Activated CD8-positive, alpha-beta memory T cell treated with anti-CD3 and anti-CD28 coated beads, Interleukin-2, amount 10 ng/mL, durations not matched to agents 7 days and 5 days (primary cell): ENCODE measurements at regions of chr14 and their contacts with region 1.

Region 1: DNA sequence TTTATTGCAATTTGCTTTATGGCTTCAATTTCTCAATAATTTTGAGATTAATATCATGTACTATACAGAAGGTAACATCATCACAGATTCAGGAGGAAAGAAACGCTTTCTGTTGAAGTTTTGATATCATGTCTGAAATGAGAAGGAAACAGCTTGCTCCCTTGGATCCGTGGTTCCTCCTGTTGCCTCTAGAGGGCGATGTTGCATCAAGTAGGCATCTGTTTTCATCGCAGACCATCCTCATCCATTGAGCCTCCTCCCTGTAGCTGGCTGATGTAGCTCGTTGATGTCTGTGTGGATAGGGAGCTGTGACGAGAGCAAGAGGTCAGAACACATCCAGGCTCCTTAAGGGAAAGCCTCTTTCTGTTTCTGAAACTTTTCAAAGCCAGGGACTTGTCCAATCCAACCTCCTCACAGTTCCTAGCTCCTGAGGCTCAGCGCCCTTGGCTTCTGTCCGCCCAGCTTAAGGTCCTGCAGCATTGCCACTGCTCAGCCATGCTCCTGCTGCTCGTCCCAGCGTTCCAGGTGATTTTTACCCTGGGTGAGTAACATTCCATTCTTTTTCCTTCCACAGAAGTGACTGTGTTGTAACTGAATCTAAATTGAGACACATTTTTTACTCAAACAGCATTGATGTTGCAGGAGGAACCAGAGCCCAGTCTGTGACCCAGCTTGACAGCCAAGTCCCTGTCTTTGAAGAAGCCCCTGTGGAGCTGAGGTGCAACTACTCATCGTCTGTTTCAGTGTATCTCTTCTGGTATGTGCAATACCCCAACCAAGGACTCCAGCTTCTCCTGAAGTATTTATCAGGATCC is 304.8 kb upstream of the OR4E1 start:
- DNase-seq: peak; percentile 77
- ATAC-seq: peak; percentile 81
- H3K4me3 Mint-ChIP-seq: peak overlapping the region; percentile 76
- H3K27ac Mint-ChIP-seq: peak overlapping the region; percentile 77
- H3K4me1 Mint-ChIP-seq: peaks cover 12% of the 10 kb centered on the region
- H3K27me3 Mint-ChIP-seq: peaks cover 6% of the 10 kb centered on the region

Region 2: DNA sequence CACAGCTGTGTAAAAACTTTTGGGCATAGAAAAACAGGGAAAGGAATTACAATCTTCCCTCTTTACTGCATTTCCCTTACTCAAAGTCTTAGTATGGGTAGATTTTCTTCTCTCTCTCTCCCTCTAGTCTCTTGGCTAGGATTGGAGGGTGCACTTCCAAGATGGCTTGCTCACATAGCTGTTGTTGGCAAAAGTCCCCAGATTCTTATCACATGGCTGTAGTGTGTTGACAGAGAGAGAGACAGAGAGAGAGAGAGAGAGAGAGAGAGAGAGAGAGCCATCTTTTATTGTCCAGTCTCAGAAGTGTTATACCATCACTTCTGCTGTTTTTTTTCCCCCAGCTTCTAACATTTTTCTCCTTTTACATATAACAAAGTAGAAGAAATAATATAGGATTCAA is 331.0 kb before region 1 on chr14:
- CTCF ChIA-PET with region 1: no interaction called
- DNase-seq: no peak
- ATAC-seq: no peak
- H3K4me3 Mint-ChIP-seq: no peak overlapping the region
- H3K27ac Mint-ChIP-seq: no peak overlapping the region
- H3K4me1 Mint-ChIP-seq: no peaks in the 10 kb centered on the region
- H3K27me3 Mint-ChIP-seq: peaks cover 22% of the 10 kb centered on the region

Region 3: DNA sequence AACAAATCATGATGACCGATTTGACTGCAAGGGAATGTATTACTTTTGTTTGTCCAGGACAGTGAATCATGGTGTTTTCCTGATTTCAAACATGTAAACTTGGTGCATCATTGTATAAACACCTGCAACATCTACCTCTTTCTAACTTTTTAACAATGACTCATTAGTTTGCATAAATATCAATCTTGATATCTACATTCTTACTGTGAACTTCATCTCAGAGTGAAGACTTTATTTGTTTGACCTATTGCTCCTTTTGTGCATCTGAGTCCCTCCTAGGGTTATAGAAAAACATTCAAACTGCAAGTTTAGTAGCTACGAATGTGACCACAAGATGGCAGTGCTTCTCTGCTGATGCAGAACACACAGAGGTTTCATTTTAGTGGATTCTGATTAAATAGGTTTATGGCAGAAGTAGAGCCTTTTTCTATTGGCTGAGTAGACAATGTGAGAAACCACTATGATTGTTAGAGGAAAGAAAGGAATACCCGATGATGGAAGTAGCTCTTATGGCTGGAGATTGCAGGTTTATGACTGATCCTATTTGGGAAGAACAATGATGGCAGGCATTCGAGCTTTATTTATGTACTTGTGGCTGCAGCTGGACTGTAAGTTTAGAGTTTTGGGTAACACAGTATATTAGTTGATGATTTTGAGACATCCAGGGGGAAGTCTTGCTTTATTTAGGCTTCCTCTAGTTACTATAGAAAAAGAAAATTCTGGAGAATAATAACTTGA is 60.5 kb before region 1 on chr14:
- CTCF ChIA-PET with region 1: interaction called, 28 read pairs
- DNase-seq: peak; percentile 75
- ATAC-seq: peak; percentile 70
- H3K4me3 Mint-ChIP-seq: peak overlapping the region; percentile 65
- H3K27ac Mint-ChIP-seq: peak overlapping the region; percentile 56
- H3K4me1 Mint-ChIP-seq: peaks cover 48% of the 10 kb centered on the region
- H3K27me3 Mint-ChIP-seq: no peaks in the 10 kb centered on the region

Region 4: DNA sequence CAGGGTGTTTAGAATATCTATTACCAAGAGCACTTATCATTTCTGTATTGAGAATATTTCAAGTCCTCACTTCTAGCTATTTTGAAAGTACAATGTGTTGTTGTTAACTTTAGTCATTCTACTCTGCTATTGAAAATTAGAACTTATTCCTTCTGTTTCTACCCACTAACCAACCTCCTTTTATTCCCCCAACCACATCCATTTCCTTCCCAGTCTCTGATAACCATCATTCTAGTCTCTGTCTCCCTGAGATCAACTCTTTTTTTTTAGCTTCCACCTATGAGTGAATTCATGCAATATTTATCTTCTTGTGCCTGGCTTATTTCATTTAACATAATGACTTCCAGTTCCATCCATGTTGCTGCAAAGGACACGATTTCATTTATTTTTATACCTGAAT is 14.2 kb before region 1 on chr14:
- CTCF ChIA-PET with region 1: interaction called, 12 read pairs
- DNase-seq: no peak
- ATAC-seq: no peak
- H3K4me3 Mint-ChIP-seq: no peak overlapping the region
- H3K27ac Mint-ChIP-seq: no peak overlapping the region
- H3K4me1 Mint-ChIP-seq: peaks cover 11% of the 10 kb centered on the region
- H3K27me3 Mint-ChIP-seq: peaks cover 5% of the 10 kb centered on the region

Region 5: GRCh38 chr14:21990116-21990515 is 11.7 kb after region 1 on chr14:
- CTCF ChIA-PET with region 1: interaction called, 19 read pairs
- DNase-seq: no peak
- ATAC-seq: peak; percentile 32
- H3K4me3 Mint-ChIP-seq: peak overlapping the region; percentile 58
- H3K27ac Mint-ChIP-seq: peak overlapping the region; percentile 65
- H3K4me1 Mint-ChIP-seq: peaks cover 34% of the 10 kb centered on the region
- H3K27me3 Mint-ChIP-seq: peaks cover 4% of the 10 kb centered on the region

Region 6: DNA sequence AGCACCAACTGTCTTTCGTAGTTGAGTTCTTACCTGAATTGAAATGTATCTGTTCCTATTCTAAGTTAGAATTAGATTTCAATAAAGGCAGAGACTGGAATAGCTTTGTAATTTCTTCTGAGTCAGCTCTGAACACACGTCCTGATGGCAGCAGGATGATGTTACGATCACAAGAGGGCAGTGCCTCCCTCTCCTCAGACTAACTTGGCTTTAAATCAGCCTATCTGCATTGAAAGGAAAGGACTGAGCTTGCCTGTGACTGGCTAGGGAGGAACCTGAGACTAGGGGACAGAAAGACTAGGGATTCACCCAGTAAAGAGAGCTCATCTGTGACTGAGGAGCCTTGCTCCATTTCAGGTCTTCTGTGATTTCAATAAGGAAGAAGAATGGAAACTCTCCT is 18.9 kb after region 1 on chr14:
- CTCF ChIA-PET with region 1: interaction called, 14 read pairs
- DNase-seq: peak; percentile 67
- ATAC-seq: peak; percentile 88
- H3K4me3 Mint-ChIP-seq: peak overlapping the region; percentile 93
- H3K27ac Mint-ChIP-seq: peak overlapping the region; percentile 97
- H3K4me1 Mint-ChIP-seq: peaks cover 29% of the 10 kb centered on the region
- H3K27me3 Mint-ChIP-seq: no peaks in the 10 kb centered on the region

Region 7: GRCh38 chr14:22047115-22047514 is 68.7 kb after region 1 on chr14:
- CTCF ChIA-PET with region 1: interaction called, 12 read pairs
- DNase-seq: peak; percentile 55
- ATAC-seq: peak; percentile 89
- H3K4me3 Mint-ChIP-seq: peak overlapping the region; percentile 36
- H3K27ac Mint-ChIP-seq: peak overlapping the region; percentile 78
- H3K4me1 Mint-ChIP-seq: peaks cover 38% of the 10 kb centered on the region
- H3K27me3 Mint-ChIP-seq: no peaks in the 10 kb centered on the region